ENCODE measurements at regions of chr17 and their contacts with region 1.

Region 1: GRCh38 chr17:9273428-9274391 is 252.4 kb downstream of the NTN1 start:
- DNase-seq: peak; percentile 67
- H3K4me3 Mint-ChIP-seq: no peak overlapping the region
- H3K27ac Mint-ChIP-seq: peak overlapping the region; percentile 76
- H3K4me1 Mint-ChIP-seq: peaks cover 22% of the 10 kb centered on the region
- H3K27me3 Mint-ChIP-seq: no peaks in the 10 kb centered on the region

Region 2: GRCh38 chr17:9115446-9116191 is 158.1 kb before region 1 on chr17:
- CTCF ChIA-PET with region 1: no interaction called
- POLR2A ChIA-PET with region 1: no interaction called
- intact Hi-C with region 1: loop called (anchors 5 kb)
- DNase-seq: peak; percentile 67
- H3K4me3 Mint-ChIP-seq: peak overlapping the region; percentile 39
- H3K27ac Mint-ChIP-seq: no peak overlapping the region
- H3K4me1 Mint-ChIP-seq: peaks cover 4% of the 10 kb centered on the region
- H3K27me3 Mint-ChIP-seq: peaks cover 15% of the 10 kb centered on the region

Region 3: DNA sequence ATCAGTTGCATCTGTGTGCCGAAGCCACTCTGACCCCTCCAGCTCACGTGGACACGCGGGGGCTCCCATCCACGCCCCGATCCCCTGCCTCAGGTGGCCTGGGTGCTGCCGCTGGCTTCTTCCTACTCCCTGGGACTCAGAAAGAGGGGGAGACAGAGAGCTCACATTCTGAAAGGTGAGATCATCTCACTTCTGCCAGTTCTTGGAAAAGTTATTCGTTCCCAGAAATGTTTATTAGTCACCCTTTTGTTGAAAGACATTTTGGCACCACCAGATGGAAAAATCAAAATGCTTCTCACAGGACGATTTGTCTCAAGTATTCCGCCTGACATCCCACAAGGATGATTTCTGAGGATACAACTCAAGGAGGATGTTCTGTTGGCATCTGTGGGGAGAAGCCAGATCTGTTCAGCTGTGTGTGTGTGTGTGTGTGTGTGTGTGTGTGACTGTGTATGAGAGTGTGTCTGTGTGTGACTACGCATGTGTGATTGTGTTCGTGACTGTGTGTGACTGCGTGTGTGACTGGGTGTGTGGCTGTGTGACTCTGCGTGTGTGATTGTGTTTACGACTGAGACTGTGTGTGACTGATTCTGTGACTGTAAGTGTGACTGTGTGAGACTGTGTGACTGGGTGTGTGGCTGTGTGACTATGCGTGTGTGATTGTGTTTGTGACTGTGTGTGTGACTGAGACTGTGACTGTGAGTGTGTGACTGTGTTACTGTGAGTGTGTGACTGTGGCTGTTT is 45.1 kb before region 1 on chr17:
- CTCF ChIA-PET with region 1: no interaction called
- POLR2A ChIA-PET with region 1: no interaction called
- intact Hi-C with region 1: loop called (anchors 1 kb)
- DNase-seq: no peak
- H3K4me3 Mint-ChIP-seq: no peak overlapping the region
- H3K27ac Mint-ChIP-seq: no peak overlapping the region
- H3K4me1 Mint-ChIP-seq: peaks cover 3% of the 10 kb centered on the region
- H3K27me3 Mint-ChIP-seq: no peaks in the 10 kb centered on the region

Region 4: DNA sequence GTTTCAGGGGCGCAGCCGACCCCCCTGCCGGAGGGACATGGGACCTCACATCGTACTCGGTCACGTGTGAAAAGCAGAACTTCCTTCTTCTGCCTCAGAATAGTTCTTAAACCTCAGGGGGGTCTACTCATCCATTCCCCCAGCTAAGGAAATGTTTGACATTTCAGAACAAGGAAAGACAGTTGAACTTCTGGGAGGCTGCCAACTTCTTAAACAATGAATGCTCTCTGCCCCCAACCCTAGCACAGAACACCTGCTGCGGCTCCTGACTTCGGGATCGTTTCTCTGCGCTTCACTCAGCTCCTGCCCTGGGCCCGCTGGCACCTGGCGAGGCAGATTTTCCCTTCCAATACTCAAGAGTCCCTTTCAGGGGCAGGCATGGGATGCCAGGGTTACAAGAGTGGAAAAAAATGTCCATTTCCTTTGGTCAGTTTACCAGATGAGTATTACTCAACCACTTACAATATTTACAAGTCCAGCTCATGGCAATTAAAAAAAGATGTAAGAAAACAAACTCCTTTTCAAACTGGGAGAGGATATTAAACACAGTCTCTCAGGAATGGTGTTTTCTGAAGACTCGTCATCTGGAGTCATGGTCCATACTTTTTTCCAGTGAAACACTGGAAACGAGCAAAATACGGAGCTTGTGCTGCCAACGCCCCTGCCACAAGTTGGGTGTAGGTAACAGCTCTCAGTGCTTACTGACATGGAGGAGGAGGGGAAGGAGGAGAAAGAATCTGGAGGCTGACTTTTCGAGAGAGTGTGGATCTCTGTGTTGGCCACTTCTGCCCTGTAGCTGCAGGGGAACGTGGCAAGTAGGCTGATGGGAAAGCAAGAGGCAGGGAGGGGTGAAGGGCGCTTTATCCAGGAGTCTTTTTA is 16.7 kb before region 1 on chr17:
- CTCF ChIA-PET with region 1: interaction called, 3 read pairs
- POLR2A ChIA-PET with region 1: interaction called, 12 read pairs
- intact Hi-C with region 1: loop called (anchors 1 kb)
- DNase-seq: no peak
- H3K4me3 Mint-ChIP-seq: no peak overlapping the region
- H3K27ac Mint-ChIP-seq: no peak overlapping the region
- H3K4me1 Mint-ChIP-seq: peaks cover 22% of the 10 kb centered on the region
- H3K27me3 Mint-ChIP-seq: no peaks in the 10 kb centered on the region

Region 5: GRCh38 chr17:9381060-9381459 is 107.3 kb after region 1 on chr17:
- CTCF ChIA-PET with region 1: no interaction called
- POLR2A ChIA-PET with region 1: no interaction called
- intact Hi-C with region 1: no loop called
- DNase-seq: no peak
- H3K4me3 Mint-ChIP-seq: no peak overlapping the region
- H3K27ac Mint-ChIP-seq: no peak overlapping the region
- H3K4me1 Mint-ChIP-seq: peaks cover 4% of the 10 kb centered on the region
- H3K27me3 Mint-ChIP-seq: no peaks in the 10 kb centered on the region

Measured in activated CD4-positive, alpha-beta memory T cell treated with anti-CD3 and anti-CD28 coated beads for 36 hours (primary cell).